ENCODE measurements at regions of chr9 and their contacts with region 1.

Region 1: DNA sequence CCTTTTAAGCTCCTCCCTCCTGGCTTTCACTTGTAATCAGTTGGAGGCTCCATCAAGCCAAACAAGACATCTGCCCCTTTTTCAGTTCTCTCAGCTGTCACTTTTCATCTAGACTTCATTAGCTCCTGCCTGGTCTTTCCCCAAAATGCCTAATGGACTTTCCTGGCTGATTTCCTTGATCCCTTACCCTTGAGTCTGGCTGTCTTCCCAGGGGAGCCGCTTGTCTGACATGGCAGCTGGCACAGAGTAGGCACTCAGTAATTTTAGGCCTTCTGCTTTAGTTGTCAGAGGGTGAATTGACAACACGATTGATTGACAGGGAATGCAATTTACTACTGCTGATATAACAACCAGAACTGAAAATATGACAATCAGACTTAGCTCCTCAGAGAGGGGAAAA is 2.1 kb downstream of the C9orf153 start:
- DNase-seq: no peak
- ATAC-seq: no peak
- H3K4me3 ChIP-seq: no peak overlapping the region
- H3K27ac ChIP-seq: no peak overlapping the region
- H3K4me1 ChIP-seq: no peaks in the 10 kb centered on the region
- H3K27me3 ChIP-seq: no peaks in the 10 kb centered on the region
- CTCF ChIP-seq: no peak
- POLR2A ChIP-seq: no peak
- RAD21 ChIP-seq: no peak

Region 2: DNA sequence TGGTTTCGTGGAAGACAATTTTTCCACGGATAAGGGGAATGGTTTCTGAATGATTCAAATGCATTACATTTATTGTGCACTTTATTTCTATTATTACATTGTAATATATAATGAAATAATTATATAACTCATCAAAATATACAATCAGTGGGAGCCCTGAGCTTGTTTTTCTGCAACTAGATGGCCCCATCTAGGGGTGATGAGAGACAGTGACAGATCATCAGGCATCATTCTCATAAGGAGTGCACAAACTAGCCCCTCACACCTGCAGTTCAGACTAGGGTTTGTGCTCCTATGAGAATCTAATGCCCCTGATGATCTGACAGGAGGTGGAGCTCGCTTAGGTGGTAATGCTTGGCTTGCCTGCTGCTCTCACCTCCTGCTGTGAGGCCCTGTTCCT is 18.6 kb after region 1 on chr9:
- CTCF ChIA-PET with region 1: interaction called, 4 read pairs
- POLR2A ChIA-PET with region 1: interaction called, 12 read pairs
- dilution Hi-C with region 1: no loop called
- in situ Hi-C with region 1: no loop called
- intact Hi-C with region 1: no loop called
- DNase-seq: no peak
- ATAC-seq: peak; percentile 48
- H3K4me3 ChIP-seq: no peak overlapping the region
- H3K27ac ChIP-seq: no peak overlapping the region
- H3K4me1 ChIP-seq: peaks cover 6% of the 10 kb centered on the region
- H3K27me3 ChIP-seq: no peaks in the 10 kb centered on the region
- CTCF ChIP-seq: no peak; the same call in 1 of the 2 replicates
- POLR2A ChIP-seq: no peak
- RAD21 ChIP-seq: peak; percentile 21; the same call in 1 of the 2 replicates

Region 3: DNA sequence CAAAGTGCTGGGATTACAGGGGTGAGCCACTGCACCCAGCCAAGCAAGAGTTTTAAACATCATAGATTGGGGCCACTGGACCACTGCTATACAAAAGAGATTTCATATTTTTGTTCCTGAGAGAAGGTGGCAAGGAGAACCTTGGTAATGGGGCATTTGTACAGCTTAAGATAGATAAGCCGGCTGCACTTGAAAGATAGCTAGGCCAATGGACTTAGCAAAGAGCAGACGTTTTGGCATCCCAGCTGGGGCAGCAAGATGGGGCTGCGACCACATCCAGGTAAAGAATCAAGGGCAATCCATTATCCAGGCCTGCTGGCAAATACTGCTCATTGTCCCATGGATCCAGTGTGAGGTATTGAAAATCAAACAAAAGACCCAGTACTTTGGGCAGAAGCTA is 28.9 kb after region 1 on chr9:
- CTCF ChIA-PET with region 1: no interaction called
- POLR2A ChIA-PET with region 1: no interaction called
- dilution Hi-C with region 1: no loop called
- in situ Hi-C with region 1: no loop called
- intact Hi-C with region 1: no loop called
- DNase-seq: no peak
- ATAC-seq: no peak
- H3K4me3 ChIP-seq: no peak overlapping the region
- H3K27ac ChIP-seq: no peak overlapping the region
- H3K4me1 ChIP-seq: peaks cover 2% of the 10 kb centered on the region
- H3K27me3 ChIP-seq: no peaks in the 10 kb centered on the region
- CTCF ChIP-seq: no peak
- POLR2A ChIP-seq: no peak
- RAD21 ChIP-seq: no peak